AG04449 (cell line): ENCODE measurements at regions of chr3 and their contacts with region 1.

Region 1: DNA sequence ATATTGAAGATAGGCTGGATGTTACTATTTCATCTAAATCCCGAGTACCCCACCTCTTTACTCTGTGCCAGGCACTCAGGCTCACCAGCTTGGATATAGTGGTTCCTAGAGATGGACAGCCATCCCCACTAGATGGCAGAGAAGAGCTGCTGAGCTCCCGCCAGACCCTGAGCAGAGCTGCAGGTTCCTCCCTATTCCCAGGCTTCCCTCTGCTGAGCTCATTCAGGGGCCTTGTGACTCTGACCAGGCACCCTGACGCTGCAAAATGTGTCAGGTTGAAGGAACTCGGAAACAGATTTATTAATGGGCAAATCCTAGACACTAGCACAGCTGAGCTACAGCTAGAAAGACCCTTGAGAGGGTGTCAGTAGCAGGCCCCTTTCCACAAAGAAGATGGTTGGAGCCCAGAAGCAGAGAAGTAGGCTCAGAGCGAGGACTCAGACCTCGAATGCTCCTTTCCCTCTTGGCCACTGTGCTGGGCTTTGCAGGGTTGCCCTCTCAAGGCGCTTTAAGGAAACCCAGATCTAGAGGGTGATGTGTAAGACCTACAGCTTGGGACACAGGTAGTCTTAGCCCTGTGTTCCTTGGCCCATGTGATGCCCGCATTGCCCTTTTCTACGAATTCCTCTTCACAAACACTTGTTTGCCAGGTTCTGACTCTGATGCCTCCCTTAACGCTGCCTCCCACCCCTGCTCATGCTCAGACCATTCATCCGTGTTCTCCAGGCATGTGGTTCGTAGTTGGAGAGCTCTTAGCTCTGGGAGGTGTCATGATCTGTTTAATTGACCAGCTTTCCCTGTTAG is 38.0 kb upstream of the RHO start:
- DNase-seq: peak; percentile 76
- H3K4me3 ChIP-seq: no peak overlapping the region
- CTCF ChIP-seq: peak; percentile 87

Region 2: GRCh38 chr3:129503471-129504291 is 13.2 kb after region 1 on chr3:
- CTCF ChIA-PET with region 1: interaction called, 12 read pairs
- POLR2A ChIA-PET with region 1: no interaction called
- DNase-seq: no peak
- H3K4me3 ChIP-seq: no peak overlapping the region
- CTCF ChIP-seq: no peak

Region 3: DNA sequence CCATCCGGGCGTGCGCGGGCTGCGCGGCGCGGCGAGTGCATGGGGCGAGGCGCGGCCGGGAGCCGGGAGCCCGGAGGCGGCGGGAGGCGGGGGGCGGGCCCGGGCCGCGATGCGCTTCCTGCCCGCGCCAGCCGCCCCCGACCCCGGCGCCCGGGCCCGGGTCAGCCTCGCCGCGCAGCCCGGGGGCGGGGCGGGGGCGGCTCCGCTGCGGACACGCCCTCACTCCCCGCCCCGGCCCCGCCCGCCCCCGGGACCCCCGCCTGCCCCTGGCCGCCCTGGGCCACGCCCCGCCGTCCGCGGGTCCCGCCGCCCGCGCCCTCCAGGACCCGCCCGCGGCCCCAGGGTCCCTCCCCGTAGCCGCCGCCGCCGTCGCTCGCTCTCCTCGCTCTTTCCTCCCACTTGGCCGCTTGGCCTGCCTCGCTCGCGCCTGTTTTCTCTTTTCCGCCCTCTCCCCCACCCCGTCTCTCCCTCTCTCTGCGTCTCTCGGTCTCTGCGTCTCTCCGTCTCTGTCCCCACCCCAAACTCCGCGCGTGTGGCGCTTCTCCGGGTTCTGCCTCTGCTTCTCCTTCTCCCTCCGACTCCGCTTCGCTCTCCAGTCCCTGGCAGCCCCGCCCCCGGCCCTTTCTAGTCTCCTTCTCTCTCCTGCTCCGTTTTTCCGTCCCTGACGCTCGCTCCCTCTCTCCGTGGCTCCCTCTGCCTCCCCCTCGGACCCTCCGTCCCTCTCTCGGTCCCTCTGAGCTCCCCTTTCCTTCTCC is 116.4 kb after region 1 on chr3 and contains the start of gene PLXND1:
- CTCF ChIA-PET with region 1: interaction called, 24 read pairs
- POLR2A ChIA-PET with region 1: interaction called, 3 read pairs
- DNase-seq: no peak
- H3K4me3 ChIP-seq: peak within 1 kb of the TSS; percentile 71
- CTCF ChIP-seq: no peak

Region 4: GRCh38 chr3:129627429-129628168 is 137.2 kb after region 1 on chr3:
- CTCF ChIA-PET with region 1: interaction called, 59 read pairs
- POLR2A ChIA-PET with region 1: interaction called, 3 read pairs
- DNase-seq: no peak
- H3K4me3 ChIP-seq: peak overlapping the region; percentile 50
- CTCF ChIP-seq: peak; percentile 75

Region 5: GRCh38 chr3:129650256-129650872 is 159.9 kb after region 1 on chr3:
- CTCF ChIA-PET with region 1: interaction called, 13 read pairs
- POLR2A ChIA-PET with region 1: interaction called, 4 read pairs
- DNase-seq: peak; percentile 61
- H3K4me3 ChIP-seq: no peak overlapping the region
- CTCF ChIP-seq: peak; percentile 67